ENCODE measurements at regions of chr4 and their contacts with region 1.

Region 1: DNA sequence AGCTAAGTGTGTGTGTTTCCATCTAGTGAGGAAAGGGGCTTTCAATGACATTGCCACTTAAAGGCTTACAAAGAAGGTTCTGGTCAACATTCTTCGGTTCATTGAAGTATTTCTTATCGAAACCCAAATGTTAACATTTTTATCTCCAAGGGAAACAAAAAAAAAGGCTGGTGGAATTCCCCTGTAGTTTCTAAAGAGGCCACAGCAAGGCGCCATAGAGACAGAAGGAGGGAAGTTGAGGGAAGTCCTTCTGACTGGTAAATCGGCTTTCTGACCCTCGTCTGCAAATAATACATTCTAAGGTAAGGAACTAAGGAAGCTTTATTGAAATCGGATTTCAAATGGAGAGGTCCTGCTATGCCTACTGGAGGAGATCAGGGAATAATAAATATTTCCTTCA is 1.7 kb upstream of the ZFP42 start:
- DNase-seq: peak; percentile 34
- ATAC-seq: peak; percentile 65; the same call in 1 of the 2 replicates
- H3K4me3 ChIP-seq: no peak overlapping the region
- H3K27ac ChIP-seq: no peak overlapping the region
- H3K4me1 ChIP-seq: peaks cover 2 to 13% of the 10 kb centered on the region in 2 experiments; a peak in 3 of 4 replicates
- H3K27me3 ChIP-seq: no peaks in the 10 kb centered on the region
- CTCF ChIP-seq: peak; percentile 57 to 72 (median 66); a peak in 5 of 6 replicates
- POLR2A ChIP-seq: no peak
- RAD21 ChIP-seq: peak; percentile 74

Region 2: DNA sequence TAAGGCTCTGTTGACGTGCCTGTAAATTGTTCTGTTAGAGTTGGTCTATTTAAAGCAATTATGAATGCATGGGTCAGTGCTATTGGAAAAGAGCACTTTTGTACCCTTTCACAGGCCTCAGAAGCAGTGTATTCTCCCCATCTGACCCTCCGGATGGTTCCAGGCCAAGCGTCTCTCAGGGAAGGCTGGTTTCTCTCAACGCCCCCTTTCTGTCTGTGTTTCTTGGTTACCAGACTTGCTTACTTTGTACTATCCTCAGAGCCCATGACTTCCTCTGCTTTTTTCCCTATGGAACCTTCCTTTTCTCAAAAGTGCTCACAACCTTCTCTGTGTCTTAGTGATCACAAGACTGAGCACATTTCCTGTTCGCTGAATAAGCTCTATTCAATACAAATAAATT is 557.6 kb before region 1 on chr4:
- CTCF ChIA-PET with region 1: no interaction called
- POLR2A ChIA-PET with region 1: no interaction called
- RAD21 ChIA-PET with region 1: no interaction called
- intact Hi-C with region 1: no loop called
- DNase-seq: no peak
- ATAC-seq: no peak
- H3K4me3 ChIP-seq: no peak overlapping the region
- H3K27ac ChIP-seq: no peak overlapping the region
- H3K4me1 ChIP-seq: no peaks in the 10 kb centered on the region
- H3K27me3 ChIP-seq: no peaks in the 10 kb centered on the region
- CTCF ChIP-seq: no peak
- POLR2A ChIP-seq: no peak
- RAD21 ChIP-seq: no peak

Region 3: GRCh38 chr4:188107931-188108843 is 114.4 kb after region 1 on chr4:
- CTCF ChIA-PET with region 1: no interaction called
- POLR2A ChIA-PET with region 1: no interaction called
- RAD21 ChIA-PET with region 1: no interaction called
- intact Hi-C with region 1: loop called (anchors 5 kb)
- DNase-seq: peak; percentile 51
- ATAC-seq: peak; percentile 51
- H3K4me3 ChIP-seq: peak overlapping the region; percentile 38 to 52
- H3K27ac ChIP-seq: peak overlapping the region; percentile 75
- H3K4me1 ChIP-seq: peaks cover 39 to 53% of the 10 kb centered on the region in 2 experiments
- H3K27me3 ChIP-seq: no peaks in the 10 kb centered on the region
- CTCF ChIP-seq: no peak
- POLR2A ChIP-seq: no peak
- RAD21 ChIP-seq: no peak

Region 4: GRCh38 chr4:188246488-188246887 is 252.7 kb after region 1 on chr4:
- CTCF ChIA-PET with region 1: interaction called, 4 read pairs
- POLR2A ChIA-PET with region 1: no interaction called
- RAD21 ChIA-PET with region 1: no interaction called
- intact Hi-C with region 1: loop called (anchors 2 kb)
- DNase-seq: peak; percentile 7
- ATAC-seq: peak; percentile 75
- H3K4me3 ChIP-seq: no peak overlapping the region
- H3K27ac ChIP-seq: no peak overlapping the region
- H3K4me1 ChIP-seq: no peaks in the 10 kb centered on the region
- H3K27me3 ChIP-seq: no peaks in the 10 kb centered on the region
- CTCF ChIP-seq: peak in 2 of 3 experiments; percentile 26 to 46; a peak in 3 of 6 replicates
- POLR2A ChIP-seq: no peak
- RAD21 ChIP-seq: peak; percentile 71

Region 5: GRCh38 chr4:188372826-188373225 is 379.0 kb after region 1 on chr4:
- CTCF ChIA-PET with region 1: no interaction called
- POLR2A ChIA-PET with region 1: no interaction called
- RAD21 ChIA-PET with region 1: no interaction called
- intact Hi-C with region 1: loop called (anchors 1 kb)
- DNase-seq: peak; percentile 67
- ATAC-seq: peak; percentile 99
- H3K4me3 ChIP-seq: no peak overlapping the region
- H3K27ac ChIP-seq: no peak overlapping the region
- H3K4me1 ChIP-seq: peaks cover 10 to 15% of the 10 kb centered on the region in 2 experiments
- H3K27me3 ChIP-seq: no peaks in the 10 kb centered on the region
- CTCF ChIP-seq: peak; percentile 28 to 97 (median 51); a peak in 5 of 6 replicates
- POLR2A ChIP-seq: no peak
- RAD21 ChIP-seq: peak; percentile 78

Region 6: GRCh38 chr4:188387179-188387791 is 393.5 kb after region 1 on chr4:
- CTCF ChIA-PET with region 1: no interaction called
- POLR2A ChIA-PET with region 1: no interaction called
- RAD21 ChIA-PET with region 1: no interaction called
- intact Hi-C with region 1: loop called (anchors 5 kb)
- DNase-seq: no peak
- ATAC-seq: no peak; the same call in 1 of the 2 replicates
- H3K4me3 ChIP-seq: no peak overlapping the region
- H3K27ac ChIP-seq: no peak overlapping the region
- H3K4me1 ChIP-seq: peaks cover 2 to 6% of the 10 kb centered on the region in 2 experiments; a peak in 2 of 4 replicates
- H3K27me3 ChIP-seq: no peaks in the 10 kb centered on the region
- CTCF ChIP-seq: no peak
- POLR2A ChIP-seq: no peak
- RAD21 ChIP-seq: no peak

Region 7: DNA sequence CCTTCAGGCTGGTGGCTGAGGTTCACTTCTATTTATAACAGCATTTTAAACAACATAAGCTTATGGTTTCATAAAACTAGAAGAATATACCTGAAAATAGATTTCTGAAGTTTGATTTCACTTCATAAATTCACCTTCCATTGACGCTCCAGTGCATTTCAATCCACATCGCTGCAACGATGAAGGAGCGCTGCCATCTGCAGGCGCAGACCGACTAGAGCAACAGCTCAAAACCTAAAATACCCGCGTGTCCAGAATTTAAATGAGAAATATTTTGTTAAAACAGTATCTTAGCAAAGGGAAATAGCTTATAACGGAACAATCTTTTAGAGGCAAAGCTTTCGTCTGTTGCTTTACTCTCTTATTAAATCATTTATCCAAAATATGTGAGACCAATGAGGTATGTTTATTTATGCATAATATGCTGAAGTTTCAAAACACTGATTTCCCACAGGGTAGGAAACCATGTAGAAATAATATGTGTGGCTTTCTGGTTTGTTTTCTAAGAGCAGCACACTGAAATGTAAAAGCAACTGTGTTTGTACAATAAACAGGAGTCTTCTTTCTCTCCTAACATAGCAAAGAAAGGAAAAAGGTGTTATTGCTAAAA is 1130.4 kb after region 1 on chr4:
- CTCF ChIA-PET with region 1: no interaction called
- POLR2A ChIA-PET with region 1: no interaction called
- RAD21 ChIA-PET with region 1: no interaction called
- intact Hi-C with region 1: loop called (anchors 5 kb)
- DNase-seq: peak; percentile 22
- ATAC-seq: peak; percentile 82
- H3K4me3 ChIP-seq: no peak overlapping the region
- H3K27ac ChIP-seq: no peak overlapping the region
- H3K4me1 ChIP-seq: no peaks in the 10 kb centered on the region
- H3K27me3 ChIP-seq: no peaks in the 10 kb centered on the region
- CTCF ChIP-seq: peak; percentile 56 to 76 (median 64); a peak in 5 of 6 replicates
- POLR2A ChIP-seq: no peak
- RAD21 ChIP-seq: peak; percentile 89

Measured in HCT116 (cell line).